HEK293 (cell line): ENCODE measurements at regions of chr9 and their contacts with region 1.

Region 1: GRCh38 chr9:132169672-132170392 is 8.0 kb downstream of the NTNG2 start:
- H3K4me3 ChIP-seq: no peak overlapping the region
- H3K27ac ChIP-seq: no peak overlapping the region
- H3K4me1 ChIP-seq: no peaks in the 10 kb centered on the region
- CTCF ChIP-seq: peak; percentile 93

Region 2: DNA sequence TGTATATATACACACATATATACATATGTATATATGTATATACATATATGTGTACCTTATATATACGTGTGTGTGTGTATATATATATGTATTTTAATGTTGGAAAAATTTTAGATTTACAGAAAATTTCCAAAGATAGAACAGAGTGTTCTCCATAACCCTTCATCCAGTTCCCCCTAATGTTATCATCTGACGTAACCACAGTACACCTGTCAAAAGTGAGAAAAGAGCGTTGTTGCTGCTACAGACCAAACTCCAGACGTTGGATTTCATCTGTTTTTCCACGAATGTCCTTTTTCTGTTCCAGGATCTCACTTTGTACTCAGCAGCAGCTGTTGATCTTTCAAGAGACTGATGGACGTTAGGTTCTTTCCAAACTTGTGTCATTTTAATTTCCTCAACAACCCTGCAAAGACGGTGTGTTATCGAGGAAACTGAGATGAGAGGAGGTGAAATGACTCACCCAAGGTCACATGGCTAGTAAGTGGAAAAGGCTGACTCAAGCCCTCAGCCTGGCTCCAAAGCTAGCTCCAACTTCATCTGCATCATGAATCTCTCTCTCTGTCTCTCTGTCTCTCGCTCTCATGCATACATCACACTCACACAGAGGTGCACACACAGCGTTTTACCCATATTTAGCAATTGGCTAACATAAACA is 25.0 kb before region 1 on chr9:
- CTCF ChIA-PET with region 1: interaction called, 17 read pairs
- POLR2A ChIA-PET with region 1: no interaction called
- H3K4me3 ChIP-seq: no peak overlapping the region
- H3K27ac ChIP-seq: no peak overlapping the region
- H3K4me1 ChIP-seq: no peaks in the 10 kb centered on the region
- CTCF ChIP-seq: no peak

Region 3: DNA sequence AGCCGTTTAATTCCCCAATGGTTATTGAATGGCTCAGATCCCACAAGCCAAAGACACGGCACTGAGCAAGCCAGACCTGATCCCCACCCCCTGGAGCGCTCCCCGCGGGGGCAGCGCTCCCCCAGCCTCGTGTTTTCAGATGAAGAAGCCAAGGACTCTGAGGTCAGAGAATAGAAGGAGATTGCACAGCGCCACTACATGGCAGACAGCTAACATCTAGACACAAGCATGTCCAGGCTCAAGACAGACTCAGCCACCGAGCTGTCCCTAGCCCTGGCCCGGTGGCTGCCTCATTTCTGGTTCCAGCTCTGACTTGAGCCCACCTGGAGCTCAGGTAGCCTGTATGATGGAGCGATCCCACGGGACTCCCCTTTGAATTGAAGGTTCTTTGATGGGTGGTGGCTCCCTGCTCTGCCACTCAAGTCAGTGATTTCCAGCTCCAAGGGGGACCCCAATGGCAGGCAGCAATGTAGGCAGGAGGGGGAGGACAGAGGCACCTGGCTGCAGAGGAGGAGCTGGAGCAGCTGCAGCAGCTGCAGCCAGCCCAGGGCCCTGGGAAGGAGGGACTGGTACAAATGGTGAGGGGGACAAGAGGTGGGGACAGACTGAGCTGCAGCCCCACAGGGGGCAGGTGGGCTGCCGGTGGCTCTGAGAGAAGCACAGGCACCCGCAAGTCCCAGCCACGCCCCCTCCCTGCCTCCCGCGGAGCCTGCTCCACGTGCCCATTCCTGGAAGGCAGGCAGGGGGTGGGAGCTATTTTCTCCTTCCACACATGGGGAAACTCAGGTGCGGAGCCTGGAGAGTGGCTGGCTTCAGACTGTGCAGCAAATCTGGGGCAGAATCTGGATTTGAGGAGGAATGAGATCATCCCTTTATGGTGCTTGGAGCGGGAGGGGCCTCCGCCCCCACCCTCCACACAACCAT is 32.2 kb after region 1 on chr9:
- CTCF ChIA-PET with region 1: interaction called, 12 read pairs
- POLR2A ChIA-PET with region 1: no interaction called
- H3K4me3 ChIP-seq: no peak overlapping the region
- H3K27ac ChIP-seq: no peak overlapping the region
- H3K4me1 ChIP-seq: 0 out of 2 replicates have a peak, but pooled peaks cover 3% of the 10 kb centered on the region
- CTCF ChIP-seq: no peak

Region 4: GRCh38 chr9:132224645-132225044 is 54.8 kb after region 1 on chr9:
- CTCF ChIA-PET with region 1: interaction called, 16 read pairs
- POLR2A ChIA-PET with region 1: no interaction called
- H3K4me3 ChIP-seq: no peak overlapping the region
- H3K27ac ChIP-seq: no peak overlapping the region
- H3K4me1 ChIP-seq: no peaks in the 10 kb centered on the region
- CTCF ChIP-seq: no peak

Region 5: DNA sequence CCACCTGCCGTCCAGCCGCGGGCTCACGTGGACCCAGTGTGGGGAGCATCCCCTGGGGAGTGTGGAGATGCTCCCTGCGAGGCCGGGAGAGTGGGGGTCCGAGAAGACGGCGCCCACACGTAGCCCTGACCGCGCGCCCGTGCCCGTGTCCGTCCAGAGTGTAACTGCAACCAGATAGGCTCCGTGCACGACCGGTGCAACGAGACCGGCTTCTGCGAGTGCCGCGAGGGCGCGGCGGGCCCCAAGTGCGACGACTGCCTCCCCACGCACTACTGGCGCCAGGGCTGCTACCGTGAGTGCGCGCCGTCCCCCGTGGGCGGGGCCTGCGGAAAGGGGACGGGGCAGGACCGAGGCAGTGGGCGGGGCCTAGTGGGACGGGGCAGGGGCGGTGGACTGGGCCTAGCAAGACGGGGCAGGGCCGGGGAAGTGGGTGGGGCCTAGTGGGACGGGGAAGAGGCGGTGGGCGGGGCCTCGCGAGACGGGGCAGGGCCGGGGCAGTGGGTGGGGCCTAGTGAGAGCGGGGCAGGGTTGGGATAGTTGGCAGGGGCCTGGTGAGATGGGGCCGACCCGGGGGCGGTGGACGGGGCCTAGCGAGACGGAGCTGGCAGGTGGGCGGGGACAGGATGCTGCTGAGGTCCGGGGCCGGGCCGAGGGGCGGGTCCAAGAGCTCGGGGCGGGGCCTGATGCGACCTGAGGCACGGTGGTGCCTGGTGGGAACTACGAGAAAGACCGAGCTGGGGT is 71.1 kb after region 1 on chr9:
- CTCF ChIA-PET with region 1: interaction called, 382 read pairs
- POLR2A ChIA-PET with region 1: interaction called, 14 read pairs
- H3K4me3 ChIP-seq: peak overlapping the region; percentile 50
- H3K27ac ChIP-seq: no peak overlapping the region
- H3K4me1 ChIP-seq: peaks cover 2% of the 10 kb centered on the region; the same call in 1 of the 2 replicates
- CTCF ChIP-seq: peak; percentile 10; the same call in 1 of the 2 replicates